GM10248 (cell line): ENCODE measurements at regions of chr2 and their contacts with region 1.

Region 1: GRCh38 chr2:37982147-37982582 is 57.1 kb downstream of the RMDN2 start:
- DNase-seq: peak; percentile 24
- CTCF ChIP-seq: peak; percentile 45

Region 2: GRCh38 chr2:38000485-38001222 is 18.5 kb after region 1 on chr2:
- CTCF ChIA-PET with region 1: interaction called, 16 read pairs
- POLR2A ChIA-PET with region 1: no interaction called
- DNase-seq: no peak
- CTCF ChIP-seq: no peak

Region 3: GRCh38 chr2:38274286-38275276 is 292.4 kb after region 1 on chr2:
- CTCF ChIA-PET with region 1: interaction called, 10 read pairs
- POLR2A ChIA-PET with region 1: no interaction called
- DNase-seq: peak; percentile 65
- CTCF ChIP-seq: peak; percentile 65